OCI-LY7 (cell line): ENCODE measurements at regions of chr16 and their contacts with region 1.

Region 1: GRCh38 chr16:75745242-75745641 is 19.0 kb upstream of the CPHXL start:
- DNase-seq: no peak
- H3K4me3 ChIP-seq: no peak overlapping the region
- H3K27ac ChIP-seq: no peak overlapping the region
- H3K4me1 ChIP-seq: no peaks in the 10 kb centered on the region
- CTCF ChIP-seq: no peak

Region 2: DNA sequence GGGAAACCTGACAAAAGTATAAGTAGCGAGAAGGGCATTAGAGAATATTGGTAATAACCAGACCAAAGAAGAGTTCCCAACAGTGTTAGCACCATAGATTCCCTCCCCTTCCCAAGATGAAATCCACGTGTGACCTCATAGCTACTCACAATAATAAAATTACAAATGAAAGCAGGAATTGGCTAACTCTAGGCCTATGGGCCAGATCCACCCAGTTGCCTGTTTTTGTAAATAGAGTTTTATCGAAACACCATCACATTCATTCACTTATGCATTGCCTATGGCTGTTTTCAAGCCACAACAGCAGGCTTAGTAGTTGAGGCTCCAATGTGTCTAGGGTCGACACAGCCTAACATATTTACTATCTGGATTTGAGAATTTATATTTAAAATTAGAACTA is 26.8 kb before region 1 on chr16:
- CTCF ChIA-PET with region 1: no interaction called
- POLR2A ChIA-PET with region 1: no interaction called
- intact Hi-C with region 1: no loop called
- DNase-seq: no peak
- H3K4me3 ChIP-seq: no peak overlapping the region
- H3K27ac ChIP-seq: no peak overlapping the region
- H3K4me1 ChIP-seq: no peaks in the 10 kb centered on the region
- CTCF ChIP-seq: no peak

Region 3: DNA sequence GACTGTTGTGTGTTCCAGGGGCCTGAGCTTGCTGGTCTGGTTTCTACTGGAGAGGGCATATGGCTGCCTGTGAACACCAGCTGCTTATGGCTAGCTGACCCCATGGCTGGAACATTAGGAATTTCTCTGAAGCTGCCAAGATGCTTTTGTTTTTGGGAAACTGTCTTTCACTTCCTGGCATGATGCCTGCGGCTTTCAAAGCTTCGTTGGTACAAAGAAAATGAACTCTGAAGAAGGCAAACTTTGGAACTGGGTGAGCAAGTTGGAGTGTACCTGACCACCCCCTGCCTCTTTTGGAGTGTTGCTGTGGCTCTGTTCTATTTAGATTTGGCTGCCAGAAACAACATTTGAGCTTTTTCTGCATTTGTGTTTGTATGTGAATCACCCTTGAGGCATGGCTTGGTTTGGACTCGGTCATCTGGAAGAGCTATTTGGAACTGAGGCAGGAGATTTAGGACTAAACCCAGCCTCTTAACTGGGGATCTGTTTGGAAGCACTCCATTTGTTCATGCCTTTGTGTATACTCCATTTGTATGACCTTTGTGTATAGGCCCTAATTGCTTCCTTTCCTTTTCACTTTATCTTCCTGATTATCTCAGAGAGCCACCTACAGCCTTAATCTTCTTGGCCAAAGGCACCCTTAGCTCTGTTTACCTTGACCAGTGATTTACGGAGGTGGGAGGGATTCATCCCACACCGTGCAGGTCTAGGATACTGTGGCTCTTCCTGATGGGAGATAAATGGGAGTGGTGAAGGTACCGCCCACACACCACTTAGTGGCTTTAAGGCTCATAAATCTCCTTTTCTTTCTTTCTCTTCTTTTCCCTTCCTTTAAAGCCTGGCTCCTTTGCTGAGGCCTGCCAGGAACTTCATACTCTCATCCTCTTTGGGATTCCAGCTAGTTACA is 11.7 kb before region 1 on chr16:
- CTCF ChIA-PET with region 1: no interaction called
- POLR2A ChIA-PET with region 1: interaction called, 10 read pairs
- intact Hi-C with region 1: no loop called
- DNase-seq: no peak
- H3K4me3 ChIP-seq: no peak overlapping the region
- H3K27ac ChIP-seq: no peak overlapping the region
- H3K4me1 ChIP-seq: no peaks in the 10 kb centered on the region
- CTCF ChIP-seq: no peak

Region 4: DNA sequence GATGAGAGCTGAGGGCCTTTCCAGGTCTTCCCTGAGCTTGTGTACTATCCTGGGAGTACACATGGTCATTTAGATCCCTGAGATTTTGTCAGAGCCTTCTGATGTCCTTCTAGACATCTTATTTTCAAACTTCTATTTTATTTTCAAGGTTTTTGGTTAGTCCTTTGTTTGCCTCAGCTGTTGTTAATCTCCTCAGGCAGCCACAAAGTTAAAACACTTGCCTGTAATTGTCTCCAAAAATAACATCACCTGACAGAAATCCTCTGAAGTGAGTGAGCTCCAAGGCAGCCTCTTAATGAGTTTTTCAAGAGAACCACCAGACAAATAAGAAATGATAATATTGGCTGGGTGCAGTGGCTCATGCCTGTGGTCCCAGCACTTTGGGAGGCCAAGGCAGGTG is 24.8 kb after region 1 on chr16:
- CTCF ChIA-PET with region 1: no interaction called
- POLR2A ChIA-PET with region 1: no interaction called
- intact Hi-C with region 1: no loop called
- DNase-seq: no peak
- H3K4me3 ChIP-seq: no peak overlapping the region
- H3K27ac ChIP-seq: no peak overlapping the region
- H3K4me1 ChIP-seq: peaks cover 14% of the 10 kb centered on the region
- CTCF ChIP-seq: no peak

Region 5: DNA sequence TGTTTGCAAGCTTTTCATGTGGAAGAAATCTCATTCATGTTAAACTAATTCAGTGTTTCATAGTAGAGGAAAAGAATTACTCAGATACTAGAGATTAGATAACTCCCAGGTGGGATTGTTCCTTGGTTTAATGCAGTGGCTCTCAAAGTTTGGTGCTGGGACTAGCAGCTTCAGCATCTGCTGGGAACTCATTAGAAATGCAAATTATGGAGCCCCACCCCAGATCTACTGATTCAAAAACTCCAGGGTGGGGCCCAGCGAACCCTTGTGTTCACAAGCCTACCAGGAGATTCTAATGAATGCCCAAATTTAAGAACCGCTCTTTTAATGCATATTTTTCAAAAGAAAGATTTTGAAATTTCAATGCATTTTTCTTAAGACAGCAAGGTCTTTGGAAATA is 278.6 kb after region 1 on chr16:
- CTCF ChIA-PET with region 1: no interaction called
- POLR2A ChIA-PET with region 1: no interaction called
- intact Hi-C with region 1: no loop called
- DNase-seq: no peak
- H3K4me3 ChIP-seq: no peak overlapping the region
- H3K27ac ChIP-seq: no peak overlapping the region
- H3K4me1 ChIP-seq: no peaks in the 10 kb centered on the region
- CTCF ChIP-seq: no peak